AG04450 (cell line): ENCODE measurements at regions of chr12 and their contacts with region 1.

Region 1: DNA sequence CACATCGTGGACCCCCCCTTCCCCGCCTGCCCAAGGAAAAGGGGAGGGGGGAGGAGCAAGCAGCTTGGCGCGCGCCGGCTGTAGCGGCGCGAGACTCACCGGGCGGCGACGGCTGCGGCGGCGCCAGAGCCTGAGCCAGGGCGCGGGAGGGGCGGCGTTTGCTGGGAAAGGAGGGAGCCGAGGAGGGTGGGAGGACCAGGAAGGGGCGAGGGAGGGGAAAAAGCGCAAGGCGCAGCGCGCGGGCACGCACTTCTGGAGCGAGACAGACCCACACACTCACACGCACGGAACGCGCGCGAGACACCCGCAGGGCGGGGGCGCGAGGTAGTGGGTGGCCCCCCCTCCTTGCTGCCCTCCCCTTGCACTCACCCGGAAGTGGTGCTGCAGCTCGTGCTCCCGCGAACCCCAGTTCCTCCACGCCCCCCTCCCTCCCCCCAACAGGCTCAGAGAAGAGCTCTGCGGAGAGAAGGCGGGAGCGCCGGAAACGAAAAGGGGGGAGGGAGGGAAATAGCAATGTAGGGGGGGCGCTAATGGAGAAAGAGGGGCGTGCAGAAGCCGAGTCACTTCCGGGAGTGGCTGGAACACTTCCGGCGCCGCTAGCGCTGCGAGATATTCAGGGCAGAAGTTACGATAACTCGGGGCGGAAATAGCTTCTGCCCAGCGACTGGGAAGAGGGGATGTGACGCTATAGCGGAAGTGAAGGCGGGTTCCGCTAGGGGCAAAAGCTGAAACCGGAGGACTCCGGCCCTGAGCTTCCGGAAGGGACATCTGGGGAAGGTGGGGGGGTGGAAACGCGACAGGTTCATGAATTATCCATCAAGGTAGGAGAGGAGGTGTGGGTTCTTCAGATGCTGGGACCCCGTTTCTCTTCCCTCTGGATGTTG is at the start of gene ZNF384:
- DNase-seq: peak; percentile 98
- H3K4me3 ChIP-seq: peak within 1 kb of the TSS; percentile 97
- H3K27ac ChIP-seq: peak within 1 kb of the TSS; percentile 90
- H3K27me3 ChIP-seq: no peaks in the 10 kb centered on the region
- CTCF ChIP-seq: peak; percentile 34; the same call in 1 of the 2 replicates
- polyA plus RNA-seq, gene ZNF384: 39.3 and 44.3 TPM in 2 replicates

Region 2: DNA sequence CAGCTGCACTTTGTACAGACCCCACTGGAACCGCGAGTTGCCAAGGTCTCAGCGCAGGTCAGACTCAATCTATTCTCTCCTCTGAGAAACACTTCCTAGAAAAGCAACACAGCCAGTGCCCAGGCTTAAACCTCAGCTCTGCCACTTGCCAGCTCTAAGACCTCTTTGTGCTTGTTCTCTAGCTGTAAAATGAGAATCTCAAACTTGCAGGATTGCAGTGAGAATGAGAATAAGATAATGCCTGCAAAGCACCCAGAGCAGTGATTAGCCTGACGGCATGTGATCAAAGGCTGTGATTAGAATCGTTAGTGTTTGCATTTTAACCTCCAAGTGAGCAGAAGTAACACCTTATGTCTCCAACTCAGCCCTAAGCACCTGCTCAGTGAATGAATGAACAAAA is 765.5 kb before region 1 on chr12:
- CTCF ChIA-PET with region 1: no interaction called
- POLR2A ChIA-PET with region 1: no interaction called
- DNase-seq: no peak
- H3K4me3 ChIP-seq: no peak overlapping the region
- H3K27ac ChIP-seq: no peak overlapping the region
- H3K27me3 ChIP-seq: peaks cover 4% of the 10 kb centered on the region
- CTCF ChIP-seq: no peak

Region 3: DNA sequence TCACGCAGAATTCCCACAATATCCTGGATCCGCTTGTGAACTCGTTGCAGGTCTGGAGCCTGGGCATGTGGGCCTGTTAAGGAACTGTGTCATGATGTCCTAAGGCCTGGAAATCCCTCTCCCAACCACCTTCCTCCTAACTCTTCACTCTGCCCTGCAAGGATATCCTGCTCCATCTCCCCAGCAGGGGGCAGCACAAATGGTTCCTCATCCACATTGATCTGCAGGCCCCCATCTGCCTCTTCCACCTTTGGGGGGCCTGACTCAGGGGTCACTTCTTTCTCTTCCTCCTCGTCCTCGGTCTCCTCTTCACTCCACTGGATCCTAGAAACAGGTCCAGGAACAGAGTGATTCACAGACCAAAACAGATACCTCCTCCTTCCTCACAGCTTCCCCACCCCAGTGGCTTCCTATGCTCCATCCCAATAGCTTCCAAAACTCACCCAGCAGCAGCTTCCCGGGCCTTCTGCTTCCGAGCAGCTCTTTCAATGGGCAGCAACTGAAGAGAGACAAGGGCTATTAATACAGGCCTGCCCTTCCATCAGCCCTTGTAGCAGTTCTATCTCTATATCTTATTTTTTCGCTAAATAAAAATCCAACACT is 125.7 kb before region 1 on chr12:
- CTCF ChIA-PET with region 1: interaction called, 3 read pairs
- POLR2A ChIA-PET with region 1: interaction called, 15 read pairs
- DNase-seq: no peak
- H3K4me3 ChIP-seq: no peak overlapping the region
- H3K27ac ChIP-seq: peak overlapping the region; percentile 21
- H3K27me3 ChIP-seq: no peaks in the 10 kb centered on the region
- CTCF ChIP-seq: peak; percentile 77

Region 4: GRCh38 chr12:6613776-6614512 is 75.3 kb before region 1 on chr12:
- CTCF ChIA-PET with region 1: interaction called, 3 read pairs
- POLR2A ChIA-PET with region 1: interaction called, 16 read pairs
- DNase-seq: peak; percentile 93
- H3K4me3 ChIP-seq: no peak overlapping the region
- H3K27ac ChIP-seq: peak overlapping the region; percentile 65
- H3K27me3 ChIP-seq: no peaks in the 10 kb centered on the region
- CTCF ChIP-seq: 0 out of 2 replicates have a peak, but pooled peaks have one; percentile 5

Region 5: DNA sequence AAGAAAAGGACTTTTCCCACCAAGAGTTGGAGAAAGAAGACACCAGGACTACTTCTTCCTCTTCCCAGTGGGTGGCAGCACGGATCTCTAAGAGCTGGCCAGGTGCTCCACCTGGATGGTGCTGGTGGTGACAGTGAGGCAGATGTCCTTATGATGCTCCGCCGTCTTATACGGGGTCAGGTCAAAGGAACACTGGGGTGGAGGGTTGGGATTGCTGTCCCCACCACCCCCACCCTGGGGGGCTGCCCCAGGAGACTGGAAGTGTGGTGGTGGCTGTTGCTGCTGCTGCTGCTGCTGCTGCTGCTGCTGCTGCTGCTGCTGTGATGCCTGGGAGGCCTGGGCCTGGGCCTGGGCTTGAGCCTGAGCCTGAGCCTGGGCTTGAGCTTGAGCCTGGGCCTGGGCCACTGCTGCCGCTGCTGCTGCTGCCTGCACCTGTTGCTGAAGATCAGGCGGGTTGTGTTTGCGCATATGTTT is 21.6 kb before region 1 on chr12:
- CTCF ChIA-PET with region 1: interaction called, 15 read pairs
- POLR2A ChIA-PET with region 1: interaction called, 6 read pairs
- DNase-seq: no peak
- H3K4me3 ChIP-seq: no peak overlapping the region
- H3K27ac ChIP-seq: no peak overlapping the region
- H3K27me3 ChIP-seq: no peaks in the 10 kb centered on the region
- CTCF ChIP-seq: no peak

Region 6: GRCh38 chr12:6723607-6724396 is 34.6 kb after region 1 on chr12 and contains the start of gene COPS7A:
- CTCF ChIA-PET with region 1: no interaction called
- POLR2A ChIA-PET with region 1: interaction called, 39 read pairs
- DNase-seq: peak; percentile 91
- H3K4me3 ChIP-seq: peak within 1 kb of the TSS; percentile 62
- H3K27ac ChIP-seq: peak within 1 kb of the TSS; percentile 92
- H3K27me3 ChIP-seq: no peaks in the 10 kb centered on the region
- CTCF ChIP-seq: no peak
- polyA plus RNA-seq, gene COPS7A: 93.2 and 104 TPM in 2 replicates

Region 7: DNA sequence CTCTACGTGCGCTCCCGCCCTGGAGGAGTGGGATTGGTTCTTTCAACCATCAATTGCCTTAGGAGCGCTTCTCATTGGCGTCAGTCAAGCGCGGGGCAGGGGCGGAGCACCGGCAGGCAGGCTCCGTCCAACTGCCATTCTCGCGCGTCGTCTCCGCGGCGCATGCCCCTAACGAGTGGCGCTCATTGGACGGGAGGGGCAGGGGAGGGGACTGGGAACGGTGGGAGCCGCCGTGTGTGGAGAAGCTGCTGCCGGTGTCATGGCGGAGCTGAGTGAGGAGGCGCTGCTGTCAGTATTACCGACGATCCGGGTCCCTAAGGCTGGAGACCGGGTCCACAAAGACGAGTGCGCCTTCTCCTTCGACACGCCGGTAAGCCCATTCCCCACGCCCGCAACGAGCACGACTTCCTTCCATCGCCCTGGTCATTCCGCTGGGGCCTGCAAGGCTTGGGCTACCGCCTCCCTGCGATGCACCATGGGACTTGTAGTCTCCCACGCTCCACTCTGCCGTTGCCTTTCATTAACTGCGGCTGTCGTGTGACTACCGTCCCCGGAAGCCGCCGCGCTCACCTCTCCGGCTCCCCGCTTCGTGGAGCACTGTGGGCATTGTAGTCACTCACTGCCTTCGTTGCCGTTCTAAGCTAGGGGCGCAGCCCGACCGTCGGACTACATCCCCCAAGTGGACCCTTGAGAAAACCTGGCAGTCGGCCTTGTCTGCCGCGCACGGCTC is 162.8 kb after region 1 on chr12 and contains the start of gene USP5:
- CTCF ChIA-PET with region 1: no interaction called
- POLR2A ChIA-PET with region 1: interaction called, 14 read pairs
- DNase-seq: peak; percentile 99
- H3K4me3 ChIP-seq: peak within 1 kb of the TSS; percentile 97
- H3K27ac ChIP-seq: peak within 1 kb of the TSS; percentile 92
- H3K27me3 ChIP-seq: no peaks in the 10 kb centered on the region
- CTCF ChIP-seq: no peak; the same call in 1 of the 2 replicates
- polyA plus RNA-seq, gene USP5: 47.1 and 54.8 TPM in 2 replicates

Region 8: DNA sequence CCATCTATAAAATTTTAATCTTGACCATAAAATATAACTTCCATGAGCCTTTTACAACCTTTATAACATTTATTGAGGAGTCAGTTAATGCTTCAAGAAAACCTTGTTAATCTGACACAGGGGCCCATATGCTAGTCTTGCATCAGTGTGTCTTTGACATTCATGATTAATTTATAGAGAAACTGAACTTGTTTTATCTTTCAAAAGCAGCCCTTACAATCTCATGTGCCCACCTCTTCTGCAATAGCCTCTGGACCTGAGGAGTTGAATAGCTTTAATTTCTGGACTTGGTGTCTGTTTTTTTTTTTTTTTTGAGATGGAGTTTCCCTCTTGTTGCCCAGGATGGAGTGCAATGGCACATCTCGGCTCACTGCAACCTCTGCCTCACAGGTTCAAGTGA is 337.6 kb after region 1 on chr12:
- CTCF ChIA-PET with region 1: no interaction called
- POLR2A ChIA-PET with region 1: no interaction called
- DNase-seq: no peak
- H3K4me3 ChIP-seq: no peak overlapping the region
- H3K27ac ChIP-seq: no peak overlapping the region
- H3K27me3 ChIP-seq: peaks cover 6% of the 10 kb centered on the region
- CTCF ChIP-seq: no peak